Activated naive CD4-positive, alpha-beta T cell treated with anti-CD3 and anti-CD28 coated beads for 36 hours (primary cell): ENCODE measurements at regions of chr3 and their contacts with region 1.

Region 1: DNA sequence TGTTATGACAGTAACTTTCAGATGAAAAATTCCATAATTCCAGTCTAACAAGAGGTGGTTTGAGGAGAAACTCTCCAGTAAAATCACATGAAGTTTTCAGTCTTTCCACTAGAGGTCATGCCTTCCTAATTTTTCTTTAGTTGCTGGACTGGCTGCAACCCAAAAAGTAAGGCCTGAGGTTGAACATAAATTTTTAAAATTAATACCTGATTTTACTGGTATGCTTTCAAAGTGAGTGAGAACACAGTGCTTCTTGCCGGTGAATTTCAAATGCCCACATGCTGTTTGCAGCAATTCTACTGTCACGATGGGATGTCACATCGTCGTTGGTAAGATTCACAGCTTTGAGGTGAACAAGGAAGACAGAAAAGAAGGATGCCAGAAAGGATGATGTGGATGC is 89.0 kb upstream of the FGF12 start:
- DNase-seq: no peak
- H3K4me3 Mint-ChIP-seq: no peak overlapping the region
- H3K27ac Mint-ChIP-seq: no peak overlapping the region
- H3K4me1 Mint-ChIP-seq: peaks cover 44% of the 10 kb centered on the region
- H3K27me3 Mint-ChIP-seq: peaks cover 7% of the 10 kb centered on the region

Region 2: GRCh38 chr3:192802957-192803899 is 13.1 kb before region 1 on chr3:
- CTCF ChIA-PET with region 1: interaction called, 12 read pairs
- intact Hi-C with region 1: no loop called
- DNase-seq: no peak
- H3K4me3 Mint-ChIP-seq: no peak overlapping the region
- H3K27ac Mint-ChIP-seq: no peak overlapping the region
- H3K4me1 Mint-ChIP-seq: no peaks in the 10 kb centered on the region
- H3K27me3 Mint-ChIP-seq: no peaks in the 10 kb centered on the region

Region 3: GRCh38 chr3:192887047-192887446 is 70.7 kb after region 1 on chr3:
- CTCF ChIA-PET with region 1: interaction called, 4 read pairs
- intact Hi-C with region 1: loop called (anchors 1 kb)
- DNase-seq: peak; percentile 36
- H3K4me3 Mint-ChIP-seq: no peak overlapping the region
- H3K27ac Mint-ChIP-seq: peak overlapping the region; percentile 82
- H3K4me1 Mint-ChIP-seq: peaks cover 59% of the 10 kb centered on the region
- H3K27me3 Mint-ChIP-seq: peaks cover 7% of the 10 kb centered on the region

Region 4: GRCh38 chr3:192917404-192918274 is 101.3 kb after region 1 on chr3 and contains the start of gene MB21D2:
- CTCF ChIA-PET with region 1: interaction called, 32 read pairs
- intact Hi-C with region 1: loop called (anchors 1 kb)
- DNase-seq: peak; percentile 52
- H3K4me3 Mint-ChIP-seq: peak within 1 kb of the TSS; percentile 94
- H3K27ac Mint-ChIP-seq: peak within 1 kb of the TSS; percentile 87
- H3K4me1 Mint-ChIP-seq: peaks cover 21% of the 10 kb centered on the region
- H3K27me3 Mint-ChIP-seq: peaks cover 45% of the 10 kb centered on the region
- total RNA-seq, gene MB21D2: 6.4 to 6.5 TPM

Region 5: DNA sequence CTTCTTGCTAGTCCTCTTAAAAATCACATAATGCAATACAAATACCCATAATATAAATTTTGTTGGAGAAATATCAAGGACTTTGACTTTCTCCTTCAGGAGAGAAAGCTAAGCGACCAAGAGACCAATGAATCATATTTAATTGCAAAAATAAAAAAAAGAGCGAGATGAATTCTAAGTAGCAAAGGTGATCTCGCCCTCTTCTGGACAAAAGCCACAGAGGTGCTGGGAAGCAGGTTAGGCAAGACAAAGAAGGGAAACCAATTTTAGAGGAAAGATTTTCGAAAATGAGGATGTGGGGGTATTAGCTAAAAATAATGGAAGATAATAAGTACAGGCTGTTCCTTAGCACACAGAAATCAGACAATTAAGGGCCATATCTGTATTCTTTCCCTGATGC is 313.2 kb after region 1 on chr3:
- CTCF ChIA-PET with region 1: interaction called, 4 read pairs
- intact Hi-C with region 1: loop called (anchors 10 kb)
- DNase-seq: no peak
- H3K4me3 Mint-ChIP-seq: no peak overlapping the region
- H3K27ac Mint-ChIP-seq: no peak overlapping the region
- H3K4me1 Mint-ChIP-seq: no peaks in the 10 kb centered on the region
- H3K27me3 Mint-ChIP-seq: peaks cover 10% of the 10 kb centered on the region

Region 6: GRCh38 chr3:193168911-193169310 is 352.6 kb after region 1 on chr3:
- CTCF ChIA-PET with region 1: no interaction called
- intact Hi-C with region 1: no loop called
- DNase-seq: no peak
- H3K4me3 Mint-ChIP-seq: no peak overlapping the region
- H3K27ac Mint-ChIP-seq: no peak overlapping the region
- H3K4me1 Mint-ChIP-seq: no peaks in the 10 kb centered on the region
- H3K27me3 Mint-ChIP-seq: no peaks in the 10 kb centered on the region